CD4-positive, alpha-beta memory T cell (primary cell): ENCODE measurements at regions of chr17 and their contacts with region 1.

Region 1: GRCh38 chr17:29722411-29723198 is 99.9 kb upstream of the CORO6 start:
- DNase-seq: peak; percentile 51 to 73 (median 57)
- H3K4me3 ChIP-seq: peak overlapping the region; percentile 1 to 6
- H3K4me3 Mint-ChIP-seq: peak overlapping the region; percentile 49 to 85 (median 74)
- H3K27ac ChIP-seq: peak overlapping the region; percentile 5
- H3K27ac Mint-ChIP-seq: peak overlapping the region; percentile 66 to 94 (median 81)
- H3K4me1 ChIP-seq: peaks cover 71% of the 10 kb centered on the region
- H3K4me1 Mint-ChIP-seq: peaks cover 58 to 82% (median 70%) of the 10 kb centered on the region in 4 donors
- H3K27me3 ChIP-seq: no peaks in the 10 kb centered on the region
- H3K27me3 Mint-ChIP-seq: no peaks in the 10 kb centered on the region

Region 2: DNA sequence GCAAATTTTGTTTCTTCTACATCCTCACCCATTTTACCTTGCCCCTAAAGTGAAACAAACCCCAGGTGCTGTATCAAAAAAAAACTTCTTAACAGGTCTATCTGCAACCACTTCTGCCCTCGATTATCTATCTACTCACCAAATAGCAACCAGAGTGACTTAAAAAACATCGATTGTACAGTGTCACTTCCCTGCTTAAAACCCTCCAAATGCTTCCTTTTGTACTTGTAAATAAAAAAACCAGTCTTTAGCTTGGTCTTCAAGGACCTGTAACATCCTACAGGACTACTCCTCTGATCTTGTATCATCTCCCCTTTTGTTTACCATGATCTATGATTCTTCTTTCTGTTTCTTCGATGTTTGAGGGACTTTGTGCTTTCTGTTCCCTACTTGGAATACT is 17.2 kb before region 1 on chr17:
- CTCF ChIA-PET with region 1: interaction called, 16 read pairs
- POLR2A ChIA-PET with region 1: interaction called, 105 read pairs
- intact Hi-C with region 1: loop called (anchors 2 kb)
- DNase-seq: peak in 4 of 5 donors; percentile 26 to 39 (median 28)
- H3K4me3 ChIP-seq: peak overlapping the region in 1 of 2 donors; percentile 16
- H3K4me3 Mint-ChIP-seq: peak overlapping the region; percentile 58 to 87 (median 76)
- H3K27ac ChIP-seq: peak overlapping the region; percentile 68
- H3K27ac Mint-ChIP-seq: peak overlapping the region; percentile 91 to 100 (median 98)
- H3K4me1 ChIP-seq: peaks cover 54% of the 10 kb centered on the region
- H3K4me1 Mint-ChIP-seq: peaks cover 30 to 61% (median 41%) of the 10 kb centered on the region in 4 donors
- H3K27me3 ChIP-seq: no peaks in the 10 kb centered on the region
- H3K27me3 Mint-ChIP-seq: no peaks in the 10 kb centered on the region

Region 3: DNA sequence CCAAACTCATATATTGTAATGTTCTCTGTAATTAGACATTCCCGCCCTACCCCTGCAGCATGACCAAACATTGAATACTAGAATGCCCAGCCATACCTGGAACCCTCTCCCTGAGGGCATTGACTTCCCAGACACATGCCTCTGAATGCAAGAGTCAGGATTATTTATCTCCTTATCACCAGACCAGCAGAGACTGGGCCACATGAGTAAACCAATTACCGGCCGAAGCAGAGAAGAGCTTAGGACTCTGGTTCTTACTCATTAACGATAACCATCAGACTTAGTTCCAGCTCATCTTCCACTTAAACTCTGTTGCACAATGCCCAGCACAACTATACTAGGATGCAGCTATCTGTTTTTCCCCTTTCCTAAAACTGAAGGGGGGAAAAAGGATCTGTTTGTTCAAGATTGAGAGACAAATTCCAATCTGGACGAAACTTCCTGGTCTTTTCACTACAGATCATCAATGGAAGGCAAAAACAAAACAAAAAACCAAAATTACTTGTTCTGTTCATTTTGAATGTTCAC is 11.7 kb before region 1 on chr17:
- CTCF ChIA-PET with region 1: interaction called, 16 read pairs
- POLR2A ChIA-PET with region 1: interaction called, 105 read pairs
- intact Hi-C with region 1: loop called (anchors 2 kb)
- DNase-seq: no peak
- H3K4me3 ChIP-seq: no peak overlapping the region
- H3K4me3 Mint-ChIP-seq: peak overlapping the region in 1 of 8 donors; percentile 2
- H3K27ac ChIP-seq: no peak overlapping the region
- H3K27ac Mint-ChIP-seq: peak overlapping the region in 5 of 7 donors; percentile 24 to 80 (median 50)
- H3K4me1 ChIP-seq: peaks cover 47% of the 10 kb centered on the region
- H3K4me1 Mint-ChIP-seq: peaks cover 43 to 74% (median 60%) of the 10 kb centered on the region in 4 donors
- H3K27me3 ChIP-seq: no peaks in the 10 kb centered on the region
- H3K27me3 Mint-ChIP-seq: no peaks in the 10 kb centered on the region

Region 4: DNA sequence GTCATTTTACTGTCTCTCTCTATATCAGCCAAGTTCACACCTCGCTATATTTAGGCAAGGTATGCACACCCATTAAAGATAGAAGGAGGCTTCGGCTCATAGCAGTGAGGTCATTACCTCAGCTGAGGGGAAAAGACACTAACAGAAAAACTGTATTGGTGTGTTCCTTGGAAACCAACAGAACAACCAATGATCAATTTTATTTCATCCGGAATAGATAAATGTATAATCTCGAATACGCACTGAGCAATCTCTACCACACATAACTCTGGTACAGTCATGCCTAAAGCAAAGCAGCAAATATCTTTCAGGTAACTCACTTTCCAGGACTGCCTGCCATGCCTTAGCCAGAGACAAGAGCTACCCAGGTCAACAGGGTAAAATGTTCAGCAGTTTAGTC is 10.0 kb after region 1 on chr17:
- CTCF ChIA-PET with region 1: interaction called, 12 read pairs
- POLR2A ChIA-PET with region 1: interaction called, 9 read pairs
- intact Hi-C with region 1: no loop called
- DNase-seq: no peak
- H3K4me3 ChIP-seq: no peak overlapping the region
- H3K4me3 Mint-ChIP-seq: peak overlapping the region in 1 of 8 donors; percentile 18
- H3K27ac ChIP-seq: no peak overlapping the region
- H3K27ac Mint-ChIP-seq: peak overlapping the region in 6 of 7 donors; percentile 6 to 81 (median 46)
- H3K4me1 ChIP-seq: peaks cover 26% of the 10 kb centered on the region
- H3K4me1 Mint-ChIP-seq: peaks cover 29 to 54% (median 44%) of the 10 kb centered on the region in 4 donors
- H3K27me3 ChIP-seq: no peaks in the 10 kb centered on the region
- H3K27me3 Mint-ChIP-seq: no peaks in the 10 kb centered on the region

Region 5: DNA sequence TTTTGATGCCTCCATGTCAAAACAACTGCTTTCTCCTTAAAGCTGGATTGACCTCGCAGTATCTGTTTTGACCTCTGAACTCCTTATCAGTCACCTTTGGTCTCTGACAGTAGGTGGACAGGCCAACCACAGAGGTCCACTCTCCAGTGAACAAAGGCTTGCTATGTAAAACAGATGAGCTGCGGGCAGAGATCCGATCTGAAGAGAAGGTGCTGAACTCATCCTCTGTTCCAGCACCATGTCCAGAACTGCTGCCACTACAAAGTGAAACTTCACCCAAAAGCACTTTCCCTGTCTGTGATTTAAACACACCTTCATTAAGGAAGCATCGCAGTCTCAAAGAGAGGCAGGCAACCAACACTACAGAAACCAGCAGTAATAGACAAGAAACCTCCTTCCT is 17.4 kb after region 1 on chr17:
- CTCF ChIA-PET with region 1: interaction called, 3 read pairs
- POLR2A ChIA-PET with region 1: interaction called, 5 read pairs
- intact Hi-C with region 1: loop called (anchors 2 kb)
- DNase-seq: no peak
- H3K4me3 ChIP-seq: no peak overlapping the region
- H3K4me3 Mint-ChIP-seq: peak overlapping the region in 4 of 8 donors; percentile 15 to 58 (median 54)
- H3K27ac ChIP-seq: no peak overlapping the region
- H3K27ac Mint-ChIP-seq: peak overlapping the region; percentile 37 to 86 (median 70)
- H3K4me1 ChIP-seq: peaks cover 28% of the 10 kb centered on the region
- H3K4me1 Mint-ChIP-seq: peaks cover 31 to 56% (median 41%) of the 10 kb centered on the region in 4 donors
- H3K27me3 ChIP-seq: no peaks in the 10 kb centered on the region
- H3K27me3 Mint-ChIP-seq: no peaks in the 10 kb centered on the region

Region 6: GRCh38 chr17:29747660-29748059 is 25.1 kb after region 1 on chr17:
- CTCF ChIA-PET with region 1: interaction called, 4 read pairs
- POLR2A ChIA-PET with region 1: interaction called, 10 read pairs
- intact Hi-C with region 1: no loop called
- DNase-seq: no peak
- H3K4me3 ChIP-seq: no peak overlapping the region
- H3K4me3 Mint-ChIP-seq: peak overlapping the region in 2 of 8 donors; percentile 8 to 29
- H3K27ac ChIP-seq: no peak overlapping the region
- H3K27ac Mint-ChIP-seq: peak overlapping the region in 5 of 7 donors; percentile 6 to 81 (median 57)
- H3K4me1 ChIP-seq: peaks cover 40% of the 10 kb centered on the region
- H3K4me1 Mint-ChIP-seq: peaks cover 41 to 83% (median 60%) of the 10 kb centered on the region in 4 donors
- H3K27me3 ChIP-seq: no peaks in the 10 kb centered on the region
- H3K27me3 Mint-ChIP-seq: no peaks in the 10 kb centered on the region